Heart left ventricle (tissue), 16 donors: ENCODE measurements at regions of chr6 and their contacts with region 1.

Region 1: DNA sequence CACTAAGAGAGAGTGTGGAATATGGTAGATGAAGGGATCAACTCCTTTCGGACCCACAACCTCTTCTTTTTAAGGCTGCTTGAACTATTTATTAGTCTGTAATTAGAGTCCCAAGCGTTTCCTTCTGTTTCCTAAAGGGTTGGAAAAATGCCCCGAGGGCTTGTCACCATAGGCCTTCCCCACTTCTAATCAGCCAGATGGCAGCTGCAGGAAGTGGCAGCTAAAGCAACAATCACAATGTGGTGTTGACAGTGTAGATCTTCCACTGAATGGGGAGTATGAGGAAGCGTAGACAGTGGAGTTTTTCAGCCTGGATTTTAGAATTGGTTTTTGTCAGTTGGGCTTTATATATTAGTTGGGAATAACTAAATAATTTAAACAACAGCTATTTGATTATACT is 40.6 kb downstream of the SLC35D3 start:
- DNase-seq: peak in 4 of 5 donors; percentile 39 to 66 (median 55)
- ATAC-seq: peak; percentile 87 to 95 (median 93)
- H3K4me3 ChIP-seq: no peak overlapping the region
- H3K27ac ChIP-seq: peak overlapping the region in 10 of 12 donors; percentile 34 to 91 (median 68)
- H3K4me1 ChIP-seq: peaks cover 0 to 17% (median 2%) of the 10 kb centered on the region in 12 donors
- H3K27me3 ChIP-seq: peaks cover 0 to 6% (median 0%) of the 10 kb centered on the region in 9 donors
- CTCF ChIP-seq: no peak
- POLR2A ChIP-seq: no peak

Region 2: GRCh38 chr6:136840276-136841001 is 122.2 kb before region 1 on chr6:
- intact Hi-C with region 1: loop called in 2 of 10 experiments (anchors 5 to 10 kb)
- DNase-seq: no peak
- ATAC-seq: no peak
- H3K4me3 ChIP-seq: no peak overlapping the region
- H3K27ac ChIP-seq: peak overlapping the region in 1 of 12 donors; percentile 12
- H3K4me1 ChIP-seq: peaks cover 0 to 12% (median 0%) of the 10 kb centered on the region in 12 donors
- H3K27me3 ChIP-seq: no peaks in the 10 kb centered on the region
- CTCF ChIP-seq: no peak
- POLR2A ChIP-seq: no peak